MCF 10A (cell line): ENCODE measurements at regions of chr16 and their contacts with region 1.

Region 1: GRCh38 chr16:57863434-57864160 is 61.3 kb upstream of the KIFC3 start:
- DNase-seq: peak; percentile 81
- H3K4me3 Mint-ChIP-seq: no peak overlapping the region
- H3K27ac Mint-ChIP-seq: no peak overlapping the region
- H3K4me1 Mint-ChIP-seq: peaks cover 7% of the 10 kb centered on the region
- H3K27me3 Mint-ChIP-seq: no peaks in the 10 kb centered on the region
- CTCF ChIP-seq: peak; percentile 63

Region 2: DNA sequence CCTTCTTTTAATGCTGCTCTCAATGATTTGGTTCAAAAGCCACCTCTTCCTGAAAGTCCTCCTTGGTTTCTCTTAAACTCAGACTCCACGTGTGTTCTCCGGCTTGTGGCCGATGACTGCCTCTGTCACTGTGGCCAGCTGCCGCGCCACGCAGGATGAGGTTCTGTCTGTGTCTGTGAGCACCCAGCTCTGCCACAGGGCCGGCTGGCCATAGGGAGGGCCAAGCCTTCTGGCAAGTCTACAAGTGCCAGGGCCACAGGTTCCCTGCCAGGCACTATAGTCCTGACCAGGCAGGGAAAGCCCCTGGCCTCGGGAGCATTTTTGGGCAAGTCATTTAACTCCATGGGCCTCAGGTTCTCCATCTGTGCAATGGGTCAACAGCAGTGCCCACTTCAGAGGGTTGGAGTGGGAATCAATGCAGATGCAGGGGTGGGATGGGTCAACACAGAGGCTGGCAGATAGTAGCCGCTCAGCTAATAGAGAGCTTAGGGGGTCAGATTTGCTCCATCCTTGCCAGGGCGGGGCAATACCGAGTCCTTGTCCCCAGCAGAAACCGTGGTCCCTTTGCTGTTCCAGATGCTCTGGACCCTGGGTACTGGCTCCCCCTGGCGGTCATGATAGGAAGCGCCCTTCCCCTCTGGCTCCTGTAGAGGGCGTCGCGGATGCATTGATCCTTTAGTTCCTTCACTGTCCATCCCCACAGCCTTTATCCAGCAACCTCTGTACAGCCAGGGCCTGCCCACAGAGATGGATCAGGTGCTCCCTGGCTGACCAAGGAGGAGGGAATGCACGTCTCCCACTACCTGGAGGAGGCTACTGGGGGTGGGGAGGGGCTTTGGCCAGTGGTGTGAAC is 214.8 kb before region 1 on chr16:
- CTCF ChIA-PET with region 1: interaction called, 8 read pairs
- POLR2A ChIA-PET with region 1: no interaction called
- intact Hi-C with region 1: loop called (anchors 1 kb)
- DNase-seq: peak; percentile 85
- H3K4me3 Mint-ChIP-seq: no peak overlapping the region
- H3K27ac Mint-ChIP-seq: no peak overlapping the region
- H3K4me1 Mint-ChIP-seq: no peaks in the 10 kb centered on the region
- H3K27me3 Mint-ChIP-seq: no peaks in the 10 kb centered on the region
- CTCF ChIP-seq: peak; percentile 100

Region 3: GRCh38 chr16:57757326-57757786 is 106.2 kb before region 1 on chr16:
- CTCF ChIA-PET with region 1: interaction called, 109 read pairs
- POLR2A ChIA-PET with region 1: interaction called, 5 read pairs
- intact Hi-C with region 1: loop called (anchors 1 kb)
- DNase-seq: peak; percentile 85
- H3K4me3 Mint-ChIP-seq: no peak overlapping the region
- H3K27ac Mint-ChIP-seq: no peak overlapping the region
- H3K4me1 Mint-ChIP-seq: no peaks in the 10 kb centered on the region
- H3K27me3 Mint-ChIP-seq: no peaks in the 10 kb centered on the region
- CTCF ChIP-seq: peak; percentile 87

Region 4: GRCh38 chr16:57795431-57795878 is 68.1 kb before region 1 on chr16:
- CTCF ChIA-PET with region 1: interaction called, 176 read pairs
- POLR2A ChIA-PET with region 1: interaction called, 17 read pairs
- intact Hi-C with region 1: loop called (anchors 1 kb)
- DNase-seq: peak; percentile 69
- H3K4me3 Mint-ChIP-seq: no peak overlapping the region
- H3K27ac Mint-ChIP-seq: peak overlapping the region; percentile 7
- H3K4me1 Mint-ChIP-seq: peaks cover 23% of the 10 kb centered on the region
- H3K27me3 Mint-ChIP-seq: no peaks in the 10 kb centered on the region
- CTCF ChIP-seq: peak; percentile 43

Region 5: GRCh38 chr16:57807968-57808528 is 55.5 kb before region 1 on chr16:
- CTCF ChIA-PET with region 1: interaction called, 12 read pairs
- POLR2A ChIA-PET with region 1: interaction called, 5 read pairs
- intact Hi-C with region 1: no loop called
- DNase-seq: peak; percentile 92
- H3K4me3 Mint-ChIP-seq: peak overlapping the region; percentile 38
- H3K27ac Mint-ChIP-seq: peak overlapping the region; percentile 76
- H3K4me1 Mint-ChIP-seq: peaks cover 58% of the 10 kb centered on the region
- H3K27me3 Mint-ChIP-seq: no peaks in the 10 kb centered on the region
- CTCF ChIP-seq: no peak

Region 6: GRCh38 chr16:57834936-57835335 is 28.7 kb before region 1 on chr16:
- CTCF ChIA-PET with region 1: interaction called, 18 read pairs
- POLR2A ChIA-PET with region 1: interaction called, 4 read pairs
- intact Hi-C with region 1: no loop called
- DNase-seq: peak; percentile 79
- H3K4me3 Mint-ChIP-seq: peak overlapping the region; percentile 25
- H3K27ac Mint-ChIP-seq: peak overlapping the region; percentile 75
- H3K4me1 Mint-ChIP-seq: peaks cover 8% of the 10 kb centered on the region
- H3K27me3 Mint-ChIP-seq: no peaks in the 10 kb centered on the region
- CTCF ChIP-seq: no peak

Region 7: GRCh38 chr16:57852189-57852588 is 11.4 kb before region 1 on chr16:
- CTCF ChIA-PET with region 1: interaction called, 19 read pairs
- POLR2A ChIA-PET with region 1: interaction called, 3 read pairs
- intact Hi-C with region 1: no loop called
- DNase-seq: no peak
- H3K4me3 Mint-ChIP-seq: no peak overlapping the region
- H3K27ac Mint-ChIP-seq: peak overlapping the region; percentile 41
- H3K4me1 Mint-ChIP-seq: no peaks in the 10 kb centered on the region
- H3K27me3 Mint-ChIP-seq: no peaks in the 10 kb centered on the region
- CTCF ChIP-seq: no peak

Region 8: DNA sequence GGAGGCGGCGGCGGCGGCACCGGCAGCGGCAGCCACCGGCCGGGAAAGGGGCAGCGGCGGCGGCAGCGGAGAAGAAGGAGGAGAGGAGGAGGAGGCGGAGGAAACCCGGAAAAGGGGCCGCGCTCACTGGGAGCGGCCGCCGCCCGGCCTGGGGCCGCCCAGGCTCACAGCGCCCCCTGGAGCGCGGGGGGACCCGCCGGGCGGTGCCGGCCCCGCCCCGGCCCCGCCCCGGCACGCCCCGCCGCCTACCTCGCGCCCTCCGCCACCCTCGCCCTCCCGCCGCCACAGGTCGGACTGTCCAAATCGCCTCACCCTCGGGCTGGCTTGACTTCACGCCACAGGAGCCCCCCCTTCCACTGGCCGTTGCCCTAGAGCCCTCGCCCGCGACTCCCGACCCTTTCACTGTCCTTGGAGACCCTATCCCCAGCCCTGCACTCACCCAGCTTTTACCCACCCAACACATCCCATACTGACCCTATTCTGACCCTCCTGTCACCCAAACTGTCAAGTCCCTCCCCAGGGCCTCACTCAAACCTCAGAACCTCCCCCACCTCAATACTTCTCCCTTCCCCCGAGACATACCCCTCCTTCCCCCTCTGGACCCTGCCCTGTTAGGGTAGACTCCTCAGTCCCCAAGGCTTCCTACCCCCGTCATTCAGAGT is 334.6 kb after region 1 on chr16 and contains the start of gene CSNK2A2:
- CTCF ChIA-PET with region 1: no interaction called
- POLR2A ChIA-PET with region 1: no interaction called
- intact Hi-C with region 1: no loop called
- DNase-seq: peak; percentile 76
- H3K4me3 Mint-ChIP-seq: peak within 1 kb of the TSS; percentile 86
- H3K27ac Mint-ChIP-seq: peak within 1 kb of the TSS; percentile 77
- H3K4me1 Mint-ChIP-seq: peaks cover 19% of the 10 kb centered on the region
- H3K27me3 Mint-ChIP-seq: no peaks in the 10 kb centered on the region
- CTCF ChIP-seq: peak; percentile 17
- total RNA-seq, gene CSNK2A2: 91.7 and 97.2 TPM in 2 replicates